Left ventricle myocardium superior (tissue), 1 donor: ENCODE measurements at regions of chr3 and their contacts with region 1.

Region 1: GRCh38 chr3:63193629-63194028 is 84.5 kb upstream of the SYNPR start:
- DNase-seq: no peak
- ATAC-seq: no peak

Region 2: GRCh38 chr3:62665598-62666437 is 527.8 kb before region 1 on chr3:
- intact Hi-C with region 1: loop called (anchors 5 kb)
- DNase-seq: peak; percentile 67
- ATAC-seq: peak; percentile 87

Region 3: GRCh38 chr3:62833531-62833930 is 360.1 kb before region 1 on chr3:
- intact Hi-C with region 1: loop called (anchors 5 kb)
- DNase-seq: no peak
- ATAC-seq: no peak